ENCODE measurements at regions of chr14 and their contacts with region 1.

Region 1: GRCh38 chr14:35678403-35679028 is 130.6 kb downstream of the RALGAPA1 start:
- DNase-seq: no peak
- H3K4me3 ChIP-seq: no peak overlapping the region
- H3K27ac ChIP-seq: no peak overlapping the region
- H3K4me1 ChIP-seq: no peaks in the 10 kb centered on the region
- H3K27me3 ChIP-seq: no peaks in the 10 kb centered on the region
- CTCF ChIP-seq: no peak

Region 2: DNA sequence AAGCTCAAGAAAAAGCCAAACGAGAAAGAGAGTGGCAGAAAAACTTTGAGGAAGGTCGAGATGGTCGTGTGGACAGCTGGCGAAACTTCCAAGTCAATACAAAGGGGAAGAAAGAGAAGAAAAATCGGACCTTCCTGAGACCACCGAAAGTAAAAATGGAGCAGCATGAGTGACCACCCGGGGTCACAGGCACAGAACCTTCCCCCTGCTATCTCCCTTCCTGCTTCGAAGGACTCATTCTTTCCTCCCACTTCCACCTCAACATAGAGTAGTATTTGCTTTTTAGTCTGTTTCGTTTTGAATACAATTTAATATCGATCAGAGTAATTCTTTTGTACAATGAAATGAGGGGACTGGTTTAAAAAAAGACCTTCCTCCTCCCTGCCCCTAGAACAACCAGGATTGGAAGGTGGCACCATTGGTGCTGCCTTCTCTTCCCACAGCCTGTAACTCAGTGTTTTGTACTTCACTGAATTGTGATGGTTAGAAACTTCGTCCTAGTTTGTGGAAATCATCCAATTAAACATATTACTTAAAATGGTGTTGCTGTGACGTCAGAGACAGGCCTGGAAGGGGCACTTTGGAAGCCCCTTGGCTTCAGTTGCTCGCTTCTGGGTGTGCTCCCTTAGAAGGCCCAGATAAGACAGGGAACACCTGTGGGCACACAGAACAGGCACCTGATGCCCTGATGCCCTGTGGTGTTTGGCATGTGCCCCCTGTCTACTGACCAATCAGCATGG is 247.9 kb before region 1 on chr14:
- CTCF ChIA-PET with region 1: no interaction called
- dilution Hi-C with region 1: loop called (anchors 5 kb)
- in situ Hi-C with region 1: loop called (anchors 25 kb)
- intact Hi-C with region 1: no loop called
- DNase-seq: no peak
- H3K4me3 ChIP-seq: no peak overlapping the region
- H3K27ac ChIP-seq: no peak overlapping the region
- H3K4me1 ChIP-seq: no peaks in the 10 kb centered on the region
- H3K27me3 ChIP-seq: no peaks in the 10 kb centered on the region
- CTCF ChIP-seq: no peak

Region 3: GRCh38 chr14:35708073-35708472 is 29.6 kb after region 1 on chr14:
- CTCF ChIA-PET with region 1: no interaction called
- dilution Hi-C with region 1: no loop called
- in situ Hi-C with region 1: no loop called
- intact Hi-C with region 1: no loop called
- DNase-seq: no peak
- H3K4me3 ChIP-seq: no peak overlapping the region
- H3K27ac ChIP-seq: no peak overlapping the region
- H3K4me1 ChIP-seq: no peaks in the 10 kb centered on the region
- H3K27me3 ChIP-seq: no peaks in the 10 kb centered on the region
- CTCF ChIP-seq: no peak

Measured in mammary epithelial cell (primary cell).